Cardiac septum (tissue), 1 donor: ENCODE measurements at regions of chr1 and their contacts with region 1.

Region 1: DNA sequence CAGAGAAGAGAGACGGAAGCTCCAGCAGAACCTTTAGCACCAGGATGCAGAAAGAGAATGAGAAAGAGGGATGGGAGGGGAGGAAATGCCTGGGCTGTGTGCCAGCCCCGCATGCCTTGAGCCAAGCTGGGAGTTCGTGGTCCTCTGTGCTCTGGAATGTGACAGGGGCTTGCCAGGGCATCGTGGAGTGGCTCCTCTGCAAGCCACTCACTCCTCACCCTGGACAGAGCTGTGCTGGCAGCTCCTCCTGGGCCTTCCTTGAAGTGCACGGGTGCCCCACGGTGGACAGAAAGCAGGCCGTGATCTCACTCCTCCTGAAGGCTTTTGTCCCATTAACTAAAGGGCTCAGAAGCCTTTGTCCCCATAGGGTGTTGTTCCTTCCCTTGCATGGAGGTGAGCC is 34.8 kb upstream of the PRELP start:
- DNase-seq: peak; percentile 81

Region 2: GRCh38 chr1:203148125-203148524 is 292.6 kb before region 1 on chr1:
- intact Hi-C with region 1: no loop called
- DNase-seq: no peak

Region 3: DNA sequence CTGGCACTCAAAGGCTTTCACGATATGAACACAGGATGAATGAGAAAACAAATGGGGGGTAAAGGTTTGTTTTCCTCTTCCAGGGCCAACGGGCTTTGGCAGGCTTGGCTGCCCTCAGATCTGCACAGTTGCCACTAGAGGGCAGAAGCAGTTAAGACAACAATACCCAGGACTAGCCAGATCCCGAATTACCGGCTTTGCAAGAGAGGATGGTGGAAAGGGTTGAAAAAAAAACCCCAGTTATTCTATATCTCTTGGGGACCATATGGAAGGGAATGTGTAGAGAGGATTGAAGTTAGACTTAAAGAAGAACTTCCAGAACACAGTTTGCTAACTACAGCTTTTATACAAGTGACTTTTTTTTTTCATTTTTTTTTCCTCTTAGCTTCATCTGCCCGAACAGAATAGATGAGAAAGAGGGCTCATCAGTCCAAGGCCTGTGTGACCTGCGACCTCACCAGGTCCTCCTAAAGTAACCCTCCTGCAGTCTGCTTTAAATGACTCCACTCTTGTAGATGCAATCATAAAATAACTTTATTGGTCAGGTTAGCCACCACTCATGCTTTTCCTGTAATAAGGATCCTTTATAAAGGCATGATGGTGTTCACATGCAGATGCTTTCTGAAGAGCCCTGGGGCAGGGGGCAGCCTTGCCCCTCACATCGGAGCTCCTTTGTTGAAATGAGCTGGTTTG is 100.5 kb before region 1 on chr1:
- intact Hi-C with region 1: loop called (anchors 1 kb)
- DNase-seq: peak; percentile 83

Region 4: DNA sequence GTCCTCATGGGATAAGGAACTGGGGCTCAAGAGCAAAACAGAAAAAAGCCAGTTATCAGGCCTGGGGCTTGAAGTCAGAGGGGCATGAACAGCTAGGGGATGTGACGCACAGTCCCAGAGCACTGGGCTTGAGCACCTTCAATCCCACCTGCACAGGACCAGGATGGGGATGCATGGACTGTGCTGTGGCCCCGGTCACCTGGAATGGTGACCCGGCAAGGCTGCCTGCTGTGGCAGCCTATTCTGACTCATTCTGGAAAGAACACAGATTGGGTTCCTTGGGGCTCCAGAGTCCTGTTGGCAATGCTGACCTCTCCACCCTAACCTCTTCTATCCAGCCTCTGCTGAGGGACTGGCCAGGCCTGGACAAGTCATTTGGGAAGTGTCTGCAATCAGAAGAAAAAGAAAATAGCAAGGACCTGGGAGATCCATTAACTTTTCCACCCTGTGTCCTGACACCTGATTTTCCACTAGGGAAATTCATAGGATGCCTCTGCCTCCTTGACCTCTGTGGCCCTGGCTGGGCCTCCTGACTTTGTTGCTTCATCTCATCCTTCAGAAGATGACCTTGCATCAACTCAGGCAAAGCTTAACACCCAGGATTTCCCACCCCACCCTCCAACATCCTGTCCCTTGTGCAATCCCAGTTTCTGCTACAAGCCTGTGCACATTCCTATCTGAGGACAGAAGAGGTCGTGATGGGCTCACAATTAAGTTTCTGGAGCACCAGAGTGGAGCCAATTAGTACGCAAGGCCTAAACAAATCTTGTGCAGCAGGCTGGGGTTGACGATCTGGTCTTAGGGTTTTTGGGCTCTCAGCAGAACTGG is 71.9 kb before region 1 on chr1:
- intact Hi-C with region 1: loop called (anchors 5 kb)
- DNase-seq: no peak

Region 5: GRCh38 chr1:203408486-203409427 is 32.0 kb before region 1 on chr1:
- intact Hi-C with region 1: loop called (anchors 5 kb)
- DNase-seq: peak; percentile 90

Region 6: DNA sequence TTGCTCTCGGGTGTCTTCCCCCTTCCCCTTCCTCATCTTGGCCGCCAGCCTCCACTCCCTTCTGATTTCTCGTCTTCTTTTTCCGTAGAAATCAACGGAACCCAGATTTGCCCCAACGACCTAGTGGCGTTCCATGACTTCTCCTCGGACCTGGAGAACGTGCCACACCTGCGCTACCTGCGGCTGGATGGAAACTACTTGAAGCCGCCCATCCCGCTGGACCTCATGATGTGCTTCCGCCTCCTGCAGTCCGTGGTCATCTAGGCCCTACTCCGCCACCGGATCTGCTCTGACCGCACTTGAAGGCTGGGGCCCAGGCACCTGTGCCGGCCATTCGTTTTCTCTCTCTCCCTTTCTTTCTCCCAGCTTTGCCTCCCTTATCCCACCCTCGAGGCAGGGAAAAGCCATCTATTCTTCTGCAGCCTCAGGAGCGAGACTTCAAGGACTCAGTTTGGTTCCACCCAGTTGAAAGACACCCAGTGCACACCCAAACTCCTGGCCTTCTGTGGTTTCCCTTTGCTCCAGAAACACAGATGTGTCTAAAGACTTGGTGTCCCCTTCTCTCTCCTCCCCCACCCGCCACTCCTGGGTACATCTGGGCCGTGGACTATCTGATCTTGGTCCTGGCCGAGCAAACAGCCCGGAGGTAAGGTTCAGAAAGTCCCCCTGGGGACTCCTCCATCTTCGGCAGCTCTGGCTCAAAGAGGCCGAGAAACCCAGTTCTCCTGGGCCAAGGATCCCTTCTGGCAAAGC is 46.0 kb after region 1 on chr1:
- intact Hi-C with region 1: loop called (anchors 2 kb)
- DNase-seq: no peak